Common myeloid progenitor, CD34-positive (primary cell): ENCODE measurements at regions of chr20 and their contacts with region 1.

Region 1: DNA sequence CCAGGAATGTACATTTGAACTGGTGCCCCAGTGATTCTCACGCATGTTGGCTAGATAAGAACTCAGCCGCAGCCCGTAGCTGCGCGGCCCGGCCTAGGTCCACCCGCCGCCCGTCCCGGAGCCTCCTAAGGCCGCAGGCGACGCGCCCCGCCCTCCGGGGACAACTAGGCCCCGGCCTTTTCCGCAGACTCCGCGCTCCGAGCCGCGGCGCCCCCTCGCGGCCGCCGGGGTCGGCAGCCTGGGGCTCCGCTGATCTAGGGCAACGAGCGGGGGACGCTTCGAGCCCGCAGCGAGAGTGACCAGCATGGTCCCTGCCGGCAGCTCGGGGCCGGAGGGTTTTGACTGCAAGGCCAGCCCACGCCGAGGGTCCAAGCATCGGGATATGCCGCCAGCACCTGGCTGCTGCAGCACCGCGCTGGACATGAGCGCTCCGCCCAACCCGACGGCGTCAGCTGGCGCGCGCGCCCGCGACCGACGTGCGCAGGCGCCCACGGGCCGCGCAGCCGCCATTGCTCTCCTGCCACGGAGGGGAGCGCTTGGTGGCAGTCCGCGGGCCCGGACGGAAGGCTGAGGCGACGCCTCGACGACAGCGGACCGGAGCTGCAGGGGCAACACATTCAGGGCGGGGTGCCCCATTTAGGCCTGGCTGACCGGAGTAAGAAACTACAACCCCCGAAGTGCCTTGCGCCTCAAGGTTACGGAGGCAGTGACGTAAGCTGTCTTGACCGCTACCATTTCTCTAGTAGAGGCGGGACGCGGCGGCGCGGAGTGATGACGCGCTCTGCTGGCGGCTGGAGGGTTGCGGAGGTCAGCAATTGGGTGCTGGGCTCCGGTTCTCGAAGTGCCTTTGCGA is at the start of gene AP5S1:
- DNase-seq: peak; percentile 94 to 95 (median 95)
- H3K4me3 ChIP-seq: peak within 1 kb of the TSS; percentile 88 to 96 (median 92)
- H3K27ac ChIP-seq: peak within 1 kb of the TSS; percentile 96 to 99
- H3K4me1 ChIP-seq: peaks cover 3 to 28% (median 18%) of the 10 kb centered on the region in 4 experiments
- H3K27me3 ChIP-seq: no peaks in the 10 kb centered on the region

Region 2: GRCh38 chr20:3716195-3716834 is 104.0 kb before region 1 on chr20:
- CTCF ChIA-PET with region 1: no interaction called
- POLR2A ChIA-PET with region 1: no interaction called
- DNase-seq: peak; percentile 64 to 77 (median 75)
- H3K4me3 ChIP-seq: no peak overlapping the region
- H3K27ac ChIP-seq: no peak overlapping the region
- H3K4me1 ChIP-seq: peaks cover 0 to 12% (median 3%) of the 10 kb centered on the region in 4 experiments
- H3K27me3 ChIP-seq: peaks cover 0 to 7% (median 0%) of the 10 kb centered on the region in 5 experiments

Region 3: DNA sequence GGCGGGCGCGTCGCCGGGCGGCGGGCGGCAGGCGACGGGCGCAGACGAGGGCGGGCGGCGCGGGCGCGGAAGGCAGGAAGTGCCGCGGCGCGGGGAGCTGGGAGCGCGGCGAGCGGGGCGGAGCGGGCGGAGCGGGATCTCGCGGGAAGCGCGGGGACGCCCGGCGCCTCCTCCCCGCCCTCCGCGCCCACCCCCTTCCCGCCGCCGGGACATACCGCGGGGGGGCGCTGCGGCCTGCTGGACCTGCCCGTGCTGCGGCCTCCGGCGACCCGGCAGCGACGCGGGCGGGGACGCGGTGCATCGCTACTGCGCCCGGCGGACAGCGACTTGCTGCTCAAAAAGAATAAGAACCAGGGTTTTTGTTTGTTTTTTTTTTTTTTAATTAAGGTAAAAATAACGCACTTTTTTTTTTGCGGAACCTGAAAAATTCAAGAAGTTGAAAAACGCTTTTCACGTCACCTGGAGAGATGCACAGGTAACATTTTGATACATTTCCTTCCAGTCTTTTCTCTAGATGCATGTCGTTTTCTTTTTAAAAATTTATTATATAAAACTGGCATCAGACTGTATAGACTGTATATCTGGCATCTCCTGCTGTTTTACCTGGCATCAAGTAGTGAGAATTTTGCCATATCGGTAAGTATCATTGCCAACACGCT is 33.5 kb before region 1 on chr20 and contains the start of gene CENPB:
- CTCF ChIA-PET with region 1: interaction called, 127 read pairs
- POLR2A ChIA-PET with region 1: interaction called, 7 read pairs
- DNase-seq: peak; percentile 87 to 93 (median 93)
- H3K4me3 ChIP-seq: peak within 1 kb of the TSS; percentile 38 to 83 (median 70)
- H3K27ac ChIP-seq: peak within 1 kb of the TSS in 1 of 2 experiments; percentile 54
- H3K4me1 ChIP-seq: peaks cover 7 to 27% (median 22%) of the 10 kb centered on the region in 4 experiments
- H3K27me3 ChIP-seq: no peaks in the 10 kb centered on the region